ENCODE measurements at regions of chr10 and their contacts with region 1.

Region 1: GRCh38 chr10:17742918-17743317 is 9.1 kb upstream of the TMEM236 start:
- DNase-seq: peak; percentile 56 to 75
- H3K4me3 ChIP-seq: peak overlapping the region; percentile 16 to 26
- H3K27ac ChIP-seq: no peak overlapping the region
- H3K4me1 ChIP-seq: peaks cover 0 to 9% (median 3%) of the 10 kb centered on the region in 4 donors
- H3K27me3 ChIP-seq: no peaks in the 10 kb centered on the region
- CTCF ChIP-seq: peak; percentile 80 to 90

Region 2: GRCh38 chr10:17454161-17455014 is 288.5 kb before region 1 on chr10 and contains the start of gene ST8SIA6:
- intact Hi-C with region 1: no loop called
- DNase-seq: no peak
- H3K4me3 ChIP-seq: peak within 1 kb of the TSS; percentile 42 to 47
- H3K27ac ChIP-seq: no peak within 1 kb of the TSS
- H3K4me1 ChIP-seq: peaks cover 0 to 19% (median 15%) of the 10 kb centered on the region in 4 donors
- H3K27me3 ChIP-seq: peaks cover 0 to 11% of the 10 kb centered on the region in 2 donors
- CTCF ChIP-seq: no peak

Region 3: DNA sequence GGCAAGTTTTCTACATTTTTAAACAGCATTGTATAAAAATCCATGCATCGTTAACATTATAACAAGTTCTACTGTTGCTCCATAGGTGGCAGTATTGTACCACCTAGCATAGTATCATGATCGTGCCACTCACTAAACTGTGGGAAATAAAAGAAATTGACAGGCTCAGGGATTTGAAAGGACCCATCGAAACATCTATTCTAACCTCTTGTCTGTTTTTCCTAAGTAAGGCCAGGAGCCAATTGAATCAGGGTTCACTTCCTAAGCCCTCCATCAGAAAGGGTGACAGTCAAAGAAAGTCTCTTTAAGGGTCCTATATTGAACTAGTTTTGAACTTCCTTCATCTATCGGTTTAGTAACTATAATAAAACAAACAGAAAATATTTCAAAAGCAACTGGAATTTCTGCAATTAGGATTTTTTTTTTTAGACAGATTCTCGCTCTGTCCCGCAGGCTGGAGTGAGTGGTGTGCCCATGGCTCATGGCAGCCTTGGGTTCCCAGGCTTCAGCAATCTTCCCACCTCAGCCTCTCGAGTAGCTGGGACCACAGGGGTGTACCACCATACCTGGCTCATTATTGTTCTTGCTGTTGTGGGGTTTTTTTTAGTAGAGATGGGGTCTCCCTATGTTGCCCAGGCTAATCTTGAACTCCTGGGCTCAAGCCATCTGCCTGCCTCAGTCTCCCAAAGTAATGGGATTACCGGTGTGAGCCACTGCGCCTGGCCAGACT is 135.2 kb before region 1 on chr10:
- intact Hi-C with region 1: loop called (anchors 2 kb)
- DNase-seq: no peak
- H3K4me3 ChIP-seq: no peak overlapping the region
- H3K27ac ChIP-seq: peak overlapping the region in 1 of 2 donors; percentile 29
- H3K4me1 ChIP-seq: peaks cover 0 to 29% (median 0%) of the 10 kb centered on the region in 4 donors
- H3K27me3 ChIP-seq: no peaks in the 10 kb centered on the region
- CTCF ChIP-seq: peak; percentile 90 to 93

Measured in tibial artery (tissue), 4 donors.